Motor neuron (in vitro differentiated cells): ENCODE measurements at regions of chrX and their contacts with region 1.

Region 1: GRCh38 chrX:50747471-50747900 is 66.5 kb downstream of the SHROOM4 start:
- ATAC-seq: no peak
- H3K4me3 ChIP-seq: no peak overlapping the region
- H3K27ac ChIP-seq: no peak overlapping the region
- H3K4me1 ChIP-seq: no peaks in the 10 kb centered on the region

Region 2: DNA sequence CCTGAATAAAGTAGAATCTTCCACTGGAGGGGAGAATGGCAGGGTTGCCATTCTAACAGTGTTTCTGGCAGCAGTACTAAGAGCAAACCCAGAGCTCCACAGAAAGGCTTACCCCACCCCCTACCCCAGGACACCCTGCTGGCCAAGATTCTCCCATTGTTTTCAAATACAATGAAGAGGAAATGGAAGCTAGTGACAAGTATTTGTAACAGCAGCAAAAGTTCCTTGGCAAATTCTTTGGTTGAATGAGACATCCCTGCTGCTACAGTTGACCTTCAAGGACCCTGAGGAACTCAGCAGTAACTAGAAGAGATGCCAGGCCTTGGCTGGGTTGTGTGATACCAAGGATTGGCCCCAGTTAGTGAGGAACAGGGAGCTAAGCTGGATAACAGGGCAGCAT is 152.7 kb before region 1 on chrX:
- in situ Hi-C with region 1: no loop called
- ATAC-seq: no peak
- H3K4me3 ChIP-seq: no peak overlapping the region
- H3K27ac ChIP-seq: no peak overlapping the region
- H3K4me1 ChIP-seq: no peaks in the 10 kb centered on the region

Region 3: GRCh38 chrX:50838820-50839600 is 91.5 kb after region 1 on chrX:
- in situ Hi-C with region 1: no loop called
- ATAC-seq: peak in 2 of 8 experiments; percentile 30 to 54
- H3K4me3 ChIP-seq: no peak overlapping the region
- H3K27ac ChIP-seq: no peak overlapping the region
- H3K4me1 ChIP-seq: no peaks in the 10 kb centered on the region

Region 4: DNA sequence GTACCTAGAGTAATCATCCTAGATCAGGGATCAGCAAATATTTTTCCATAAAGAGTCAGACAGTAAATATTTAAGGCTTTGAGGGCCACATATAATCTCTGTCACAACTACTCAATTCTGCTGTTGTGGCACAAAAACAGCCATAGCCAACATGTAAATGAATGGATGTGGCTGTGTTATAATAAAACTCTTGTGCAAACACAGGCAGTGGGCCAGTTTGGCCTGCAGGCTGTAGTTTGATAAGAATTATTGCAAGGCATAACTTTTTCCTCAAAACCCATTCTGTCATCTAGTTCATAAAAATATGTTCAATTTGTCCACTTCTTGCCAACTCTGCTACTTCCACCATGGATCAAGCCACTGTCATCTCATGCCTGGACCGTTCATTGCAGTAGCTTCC is 105.9 kb after region 1 on chrX:
- in situ Hi-C with region 1: no loop called
- ATAC-seq: peak in 1 of 8 experiments; percentile 70
- H3K4me3 ChIP-seq: no peak overlapping the region
- H3K27ac ChIP-seq: no peak overlapping the region
- H3K4me1 ChIP-seq: no peaks in the 10 kb centered on the region

Region 5: GRCh38 chrX:50920132-50920531 is 172.6 kb after region 1 on chrX:
- in situ Hi-C with region 1: loop called in 2 of 9 experiments (anchors 25 kb)
- ATAC-seq: no peak
- H3K4me3 ChIP-seq: no peak overlapping the region
- H3K27ac ChIP-seq: no peak overlapping the region
- H3K4me1 ChIP-seq: no peaks in the 10 kb centered on the region